Calu3 (cell line): ENCODE measurements at regions of chr1 and their contacts with region 1.

Region 1: GRCh38 chr1:242467556-242468145 is 56.8 kb downstream of the PLD5 start:
- DNase-seq: peak; percentile 74
- H3K4me3 Mint-ChIP-seq: no peak overlapping the region
- H3K27ac Mint-ChIP-seq: no peak overlapping the region
- H3K4me1 Mint-ChIP-seq: peaks cover 10% of the 10 kb centered on the region
- H3K27me3 Mint-ChIP-seq: no peaks in the 10 kb centered on the region
- CTCF ChIP-seq: peak; percentile 73

Region 2: GRCh38 chr1:242546849-242547729 is 79.4 kb after region 1 on chr1:
- CTCF ChIA-PET with region 1: no interaction called
- intact Hi-C with region 1: no loop called
- DNase-seq: no peak
- H3K4me3 Mint-ChIP-seq: no peak overlapping the region
- H3K27ac Mint-ChIP-seq: no peak overlapping the region
- H3K4me1 Mint-ChIP-seq: no peaks in the 10 kb centered on the region
- H3K27me3 Mint-ChIP-seq: no peaks in the 10 kb centered on the region
- CTCF ChIP-seq: no peak

Region 3: GRCh38 chr1:242651817-242652216 is 184.2 kb after region 1 on chr1:
- CTCF ChIA-PET with region 1: no interaction called
- intact Hi-C with region 1: loop called (anchors 5 kb)
- DNase-seq: peak; percentile 45
- H3K4me3 Mint-ChIP-seq: no peak overlapping the region
- H3K27ac Mint-ChIP-seq: no peak overlapping the region
- H3K4me1 Mint-ChIP-seq: no peaks in the 10 kb centered on the region
- H3K27me3 Mint-ChIP-seq: peaks cover 19% of the 10 kb centered on the region
- CTCF ChIP-seq: no peak

Region 4: GRCh38 chr1:242800521-242800920 is 332.9 kb after region 1 on chr1:
- CTCF ChIA-PET with region 1: no interaction called
- intact Hi-C with region 1: loop called (anchors 2 kb)
- DNase-seq: no peak
- H3K4me3 Mint-ChIP-seq: no peak overlapping the region
- H3K27ac Mint-ChIP-seq: no peak overlapping the region
- H3K4me1 Mint-ChIP-seq: no peaks in the 10 kb centered on the region
- H3K27me3 Mint-ChIP-seq: no peaks in the 10 kb centered on the region
- CTCF ChIP-seq: no peak

Region 5: GRCh38 chr1:243325305-243325890 is 857.7 kb after region 1 on chr1:
- CTCF ChIA-PET with region 1: no interaction called
- intact Hi-C with region 1: loop called (anchors 10 kb)
- DNase-seq: peak; percentile 43
- H3K4me3 Mint-ChIP-seq: no peak overlapping the region
- H3K27ac Mint-ChIP-seq: no peak overlapping the region
- H3K4me1 Mint-ChIP-seq: peaks cover 9% of the 10 kb centered on the region
- H3K27me3 Mint-ChIP-seq: no peaks in the 10 kb centered on the region
- CTCF ChIP-seq: peak; percentile 81